Mammary epithelial cell (primary cell): ENCODE measurements at regions of chr4 and their contacts with region 1.

Region 1: GRCh38 chr4:7524064-7524682 is 89.4 kb upstream of the PSAPL1 start:
- DNase-seq: no peak
- H3K4me3 ChIP-seq: no peak overlapping the region
- H3K27ac ChIP-seq: no peak overlapping the region
- H3K4me1 ChIP-seq: no peaks in the 10 kb centered on the region
- H3K27me3 ChIP-seq: peaks cover 7% of the 10 kb centered on the region
- CTCF ChIP-seq: no peak

Region 2: DNA sequence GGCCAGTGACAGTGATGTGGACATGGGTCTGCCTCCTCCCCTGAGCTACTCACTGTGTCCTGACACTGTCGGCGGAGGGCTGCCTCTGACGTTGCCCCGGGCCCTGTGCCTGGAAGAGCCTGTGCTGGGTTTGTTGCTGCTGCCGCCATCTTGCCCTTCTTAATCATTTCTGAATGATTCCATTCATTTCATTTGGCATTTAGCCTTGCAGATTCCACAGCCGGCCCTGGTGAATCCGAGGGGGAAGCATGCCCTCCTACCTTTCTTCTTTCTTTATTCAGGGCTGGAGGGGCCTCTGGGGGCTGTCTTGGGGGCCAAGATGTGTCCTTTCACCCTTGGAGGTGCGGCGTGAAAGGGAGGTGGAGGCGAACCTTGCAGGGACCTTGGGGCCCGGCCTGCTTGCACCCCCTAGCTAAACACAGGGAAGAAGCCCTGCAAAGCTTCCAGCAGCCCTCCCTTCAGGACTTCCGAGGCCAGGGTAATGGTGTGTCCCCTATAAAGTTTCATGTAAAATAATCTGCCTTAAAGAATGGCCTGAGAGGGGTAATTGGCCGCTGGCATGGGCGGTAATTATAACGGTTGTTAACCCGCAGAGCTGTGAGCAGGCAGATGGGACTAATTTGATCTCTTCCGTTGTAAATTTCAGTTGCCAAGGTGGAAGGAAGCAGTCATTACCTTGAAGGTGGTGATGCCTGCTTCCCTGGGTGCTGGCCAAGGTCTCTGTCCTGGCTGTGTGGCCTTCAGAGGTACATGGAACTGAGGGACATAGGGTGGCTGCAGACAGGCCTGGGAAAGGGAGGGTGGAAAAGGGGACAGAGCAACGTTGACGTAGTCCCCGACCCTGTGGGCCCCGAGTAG is 181.7 kb before region 1 on chr4:
- CTCF ChIA-PET with region 1: no interaction called
- dilution Hi-C with region 1: loop called (anchors 10 kb)
- in situ Hi-C with region 1: no loop called
- intact Hi-C with region 1: no loop called
- DNase-seq: no peak
- H3K4me3 ChIP-seq: no peak overlapping the region
- H3K27ac ChIP-seq: no peak overlapping the region
- H3K4me1 ChIP-seq: no peaks in the 10 kb centered on the region
- H3K27me3 ChIP-seq: no peaks in the 10 kb centered on the region
- CTCF ChIP-seq: no peak